ENCODE measurements at regions of chr2 and their contacts with region 1.

Region 1: GRCh38 chr2:12127638-12128037 is 381.2 kb downstream of the LPIN1 start:
- DNase-seq: peak in 6 of 9 donors; percentile 40 to 63 (median 56)
- ATAC-seq: peak; percentile 80
- H3K4me3 ChIP-seq: peak overlapping the region; percentile 10
- H3K4me3 Mint-ChIP-seq: peak overlapping the region in 5 of 10 donors; percentile 34 to 90 (median 73)
- H3K27ac ChIP-seq: peak overlapping the region; percentile 63
- H3K27ac Mint-ChIP-seq: peak overlapping the region in 3 of 9 donors; percentile 84 to 95 (median 87)
- H3K4me1 ChIP-seq: peaks cover 22 to 61% of the 10 kb centered on the region in 2 donors
- H3K4me1 Mint-ChIP-seq: peaks cover 0 to 22% (median 0%) of the 10 kb centered on the region in 7 donors
- H3K27me3 ChIP-seq: no peaks in the 10 kb centered on the region
- H3K27me3 Mint-ChIP-seq: no peaks in the 10 kb centered on the region

Region 2: DNA sequence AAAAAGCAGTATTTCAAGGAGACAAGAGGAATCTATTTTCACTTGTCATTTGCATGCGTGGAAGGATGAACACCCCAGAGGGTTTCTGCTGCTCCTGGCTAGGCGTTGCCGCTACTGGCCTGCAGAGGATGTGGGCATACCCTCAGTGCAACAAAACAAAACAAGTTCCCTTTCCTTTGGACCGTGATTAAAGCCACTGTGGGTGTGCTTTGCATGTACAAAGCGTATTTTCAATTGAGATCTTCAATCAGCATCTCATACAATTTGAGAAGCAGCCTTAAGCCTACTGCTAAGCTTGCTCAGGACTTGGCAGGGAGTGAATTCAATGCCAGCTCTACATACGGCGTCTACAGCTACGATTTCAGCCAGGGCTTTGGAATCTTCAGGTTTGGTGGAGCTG is 82.8 kb before region 1 on chr2:
- CTCF ChIA-PET with region 1: interaction called, 3 read pairs
- POLR2A ChIA-PET with region 1: no interaction called
- intact Hi-C with region 1: loop called in 1 of 2 experiments (anchors 5 kb)
- DNase-seq: peak in 6 of 9 donors; percentile 69 to 88 (median 80)
- ATAC-seq: peak; percentile 93
- H3K4me3 ChIP-seq: peak overlapping the region; percentile 2
- H3K4me3 Mint-ChIP-seq: peak overlapping the region; percentile 31 to 78 (median 62)
- H3K27ac ChIP-seq: peak overlapping the region; percentile 9
- H3K27ac Mint-ChIP-seq: peak overlapping the region; percentile 21 to 88 (median 78)
- H3K4me1 ChIP-seq: peaks cover 16 to 42% of the 10 kb centered on the region in 2 donors
- H3K4me1 Mint-ChIP-seq: peaks cover 16 to 80% (median 65%) of the 10 kb centered on the region in 7 donors
- H3K27me3 ChIP-seq: no peaks in the 10 kb centered on the region
- H3K27me3 Mint-ChIP-seq: peaks cover 0 to 19% (median 0%) of the 10 kb centered on the region in 5 donors

Region 3: GRCh38 chr2:12106440-12107080 is 21.1 kb before region 1 on chr2:
- CTCF ChIA-PET with region 1: interaction called, 4 read pairs
- POLR2A ChIA-PET with region 1: interaction called, 5 read pairs
- intact Hi-C with region 1: loop called in 1 of 2 experiments (anchors 1 kb)
- DNase-seq: peak in 1 of 9 donors; percentile 40
- ATAC-seq: no peak
- H3K4me3 ChIP-seq: no peak overlapping the region
- H3K4me3 Mint-ChIP-seq: no peak overlapping the region
- H3K27ac ChIP-seq: no peak overlapping the region
- H3K27ac Mint-ChIP-seq: no peak overlapping the region
- H3K4me1 ChIP-seq: peaks cover 5 to 31% of the 10 kb centered on the region in 2 donors
- H3K4me1 Mint-ChIP-seq: peaks cover 16 to 57% (median 47%) of the 10 kb centered on the region in 7 donors
- H3K27me3 ChIP-seq: no peaks in the 10 kb centered on the region
- H3K27me3 Mint-ChIP-seq: no peaks in the 10 kb centered on the region

Region 4: GRCh38 chr2:12176623-12177454 is 49.2 kb after region 1 on chr2:
- CTCF ChIA-PET with region 1: interaction called, 3 read pairs
- POLR2A ChIA-PET with region 1: interaction called, 3 read pairs
- intact Hi-C with region 1: loop called in 1 of 2 experiments (anchors 5 kb)
- DNase-seq: peak in 1 of 9 donors; percentile 13
- ATAC-seq: peak; percentile 83
- H3K4me3 ChIP-seq: peak overlapping the region; percentile 21
- H3K4me3 Mint-ChIP-seq: peak overlapping the region in 9 of 10 donors; percentile 25 to 76 (median 62)
- H3K27ac ChIP-seq: no peak overlapping the region
- H3K27ac Mint-ChIP-seq: peak overlapping the region in 8 of 9 donors; percentile 8 to 95 (median 58)
- H3K4me1 ChIP-seq: peaks cover 10 to 25% of the 10 kb centered on the region in 2 donors
- H3K4me1 Mint-ChIP-seq: peaks cover 33 to 67% (median 52%) of the 10 kb centered on the region in 7 donors
- H3K27me3 ChIP-seq: no peaks in the 10 kb centered on the region
- H3K27me3 Mint-ChIP-seq: peaks cover 0 to 7% (median 0%) of the 10 kb centered on the region in 5 donors

Region 5: DNA sequence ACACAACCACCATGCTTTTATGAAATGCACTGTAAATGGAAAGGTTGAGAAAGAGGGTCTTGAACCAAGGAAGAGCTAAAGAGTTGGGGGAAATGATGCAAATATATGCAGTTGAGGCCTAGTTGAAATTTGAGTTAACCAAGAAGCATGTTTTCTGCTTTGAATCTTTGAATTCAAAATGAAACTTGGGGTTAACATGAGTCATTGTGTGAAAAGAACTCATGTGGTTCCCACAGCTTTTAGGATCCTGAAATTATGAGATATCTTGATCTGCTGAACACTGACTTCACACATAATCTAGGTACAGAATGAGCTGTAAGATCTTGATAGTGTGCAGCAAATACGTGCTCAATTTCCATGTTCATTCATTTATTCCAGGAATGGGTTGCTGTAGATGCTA is 166.2 kb after region 1 on chr2:
- CTCF ChIA-PET with region 1: no interaction called
- POLR2A ChIA-PET with region 1: no interaction called
- intact Hi-C with region 1: loop called in 1 of 2 experiments (anchors 5 kb)
- DNase-seq: no peak
- ATAC-seq: peak; percentile 27
- H3K4me3 ChIP-seq: no peak overlapping the region
- H3K4me3 Mint-ChIP-seq: peak overlapping the region in 5 of 10 donors; percentile 13 to 75 (median 60)
- H3K27ac ChIP-seq: no peak overlapping the region
- H3K27ac Mint-ChIP-seq: peak overlapping the region in 4 of 9 donors; percentile 18 to 90 (median 68)
- H3K4me1 ChIP-seq: peaks cover 0 to 16% of the 10 kb centered on the region in 2 donors
- H3K4me1 Mint-ChIP-seq: peaks cover 19 to 53% (median 40%) of the 10 kb centered on the region in 7 donors
- H3K27me3 ChIP-seq: no peaks in the 10 kb centered on the region
- H3K27me3 Mint-ChIP-seq: peaks cover 0 to 4% (median 0%) of the 10 kb centered on the region in 5 donors

Region 6: DNA sequence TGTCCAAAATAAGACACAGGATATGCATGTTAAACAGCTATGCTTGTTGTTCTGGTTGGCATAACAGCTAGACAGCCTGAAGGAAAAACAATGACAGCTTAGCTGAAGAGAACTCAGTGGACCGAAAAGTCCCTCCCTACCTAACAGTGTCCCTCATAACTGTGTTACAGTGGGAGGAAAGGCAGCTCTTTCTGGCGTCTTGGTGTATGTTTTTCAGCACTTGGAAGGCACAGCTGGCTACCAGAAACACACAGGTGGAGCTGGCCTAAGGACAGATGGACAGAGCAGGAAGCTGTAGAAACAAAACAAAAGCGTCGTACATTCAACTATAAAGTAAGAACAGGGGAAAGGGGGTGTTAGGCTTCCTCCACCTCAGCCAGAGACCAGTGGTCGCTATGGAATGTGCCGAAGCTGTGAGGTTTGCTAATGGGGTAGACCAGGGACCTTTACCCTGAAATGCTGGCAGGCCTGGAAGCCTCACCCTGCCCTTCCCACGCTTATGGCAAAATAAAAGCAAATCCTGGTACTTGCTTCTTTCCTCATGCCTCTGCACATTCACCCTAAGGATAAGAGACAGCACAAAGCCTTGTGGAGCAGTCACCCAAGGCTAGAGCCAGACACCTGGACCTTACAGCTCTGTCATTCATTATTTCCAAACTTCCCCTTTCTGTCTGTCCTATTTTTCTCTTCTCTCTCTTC is 485.6 kb after region 1 on chr2:
- CTCF ChIA-PET with region 1: no interaction called
- POLR2A ChIA-PET with region 1: no interaction called
- intact Hi-C with region 1: no loop called
- DNase-seq: no peak
- ATAC-seq: no peak
- H3K4me3 ChIP-seq: no peak overlapping the region
- H3K4me3 Mint-ChIP-seq: no peak overlapping the region
- H3K27ac ChIP-seq: no peak overlapping the region
- H3K27ac Mint-ChIP-seq: peak overlapping the region in 3 of 9 donors; percentile 23 to 84 (median 35)
- H3K4me1 ChIP-seq: no peaks in the 10 kb centered on the region
- H3K4me1 Mint-ChIP-seq: peaks cover 5 to 18% (median 11%) of the 10 kb centered on the region in 7 donors
- H3K27me3 ChIP-seq: no peaks in the 10 kb centered on the region
- H3K27me3 Mint-ChIP-seq: peaks cover 0 to 3% (median 0%) of the 10 kb centered on the region in 5 donors

Measured in naive thymus-derived CD4-positive, alpha-beta T cell (primary cell).